ENCODE measurements at regions of chr6 and their contacts with region 1.

Region 1: DNA sequence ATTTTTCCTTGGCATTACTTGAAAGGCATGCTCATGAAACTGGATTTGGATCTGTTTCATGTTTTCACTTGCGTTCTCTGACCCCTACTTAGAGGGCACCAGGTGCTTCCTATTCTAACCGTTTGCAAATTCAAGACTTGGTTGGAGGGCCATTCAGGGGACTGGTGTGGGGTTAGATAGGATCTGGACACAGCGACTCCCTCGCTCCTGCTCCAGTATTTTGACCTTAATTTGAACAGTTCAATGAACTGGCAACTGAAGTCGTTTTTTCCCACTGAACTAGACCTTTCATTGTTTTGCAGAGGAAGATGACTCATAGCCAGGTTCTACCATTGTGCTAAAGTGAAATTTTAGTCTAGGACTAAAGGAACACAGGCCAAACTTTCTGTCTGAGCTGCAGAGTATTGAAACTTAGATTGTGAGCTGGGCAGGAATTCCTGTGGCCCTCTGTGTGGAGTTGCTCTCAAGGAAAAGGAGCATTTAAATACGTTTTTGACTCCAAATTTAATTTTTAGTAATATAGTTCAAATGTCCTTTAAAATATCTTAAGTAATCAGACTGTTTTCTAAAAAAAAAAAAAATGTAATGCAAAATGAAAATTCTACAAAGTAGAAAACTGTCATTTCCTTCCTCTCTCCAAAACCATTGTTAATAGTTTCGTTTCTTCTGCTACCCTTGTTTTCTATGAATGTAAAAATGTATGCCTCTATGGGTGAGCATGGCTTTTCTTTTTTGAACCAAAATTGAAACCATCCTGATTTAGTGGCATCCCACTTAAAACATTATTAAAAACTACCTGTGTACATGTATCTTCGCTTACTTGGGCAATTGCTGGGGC is 64.8 kb downstream of the UTRN start:
- DNase-seq: no peak
- H3K4me3 Mint-ChIP-seq: peak overlapping the region; percentile 83
- H3K27ac Mint-ChIP-seq: peak overlapping the region; percentile 94
- H3K4me1 Mint-ChIP-seq: peaks cover 89% of the 10 kb centered on the region
- H3K27me3 Mint-ChIP-seq: no peaks in the 10 kb centered on the region

Region 2: GRCh38 chr6:144248476-144249301 is 101.2 kb before region 1 on chr6:
- intact Hi-C with region 1: loop called (anchors 2 kb)
- DNase-seq: no peak
- H3K4me3 Mint-ChIP-seq: no peak overlapping the region
- H3K27ac Mint-ChIP-seq: peak overlapping the region; percentile 57
- H3K4me1 Mint-ChIP-seq: peaks cover 26% of the 10 kb centered on the region
- H3K27me3 Mint-ChIP-seq: peaks cover 7% of the 10 kb centered on the region

Region 3: GRCh38 chr6:144305985-144306384 is 43.9 kb before region 1 on chr6:
- intact Hi-C with region 1: loop called (anchors 1 kb)
- DNase-seq: peak; percentile 41
- H3K4me3 Mint-ChIP-seq: peak overlapping the region; percentile 58
- H3K27ac Mint-ChIP-seq: peak overlapping the region; percentile 85
- H3K4me1 Mint-ChIP-seq: peaks cover 51% of the 10 kb centered on the region
- H3K27me3 Mint-ChIP-seq: peaks cover 6% of the 10 kb centered on the region

Region 4: DNA sequence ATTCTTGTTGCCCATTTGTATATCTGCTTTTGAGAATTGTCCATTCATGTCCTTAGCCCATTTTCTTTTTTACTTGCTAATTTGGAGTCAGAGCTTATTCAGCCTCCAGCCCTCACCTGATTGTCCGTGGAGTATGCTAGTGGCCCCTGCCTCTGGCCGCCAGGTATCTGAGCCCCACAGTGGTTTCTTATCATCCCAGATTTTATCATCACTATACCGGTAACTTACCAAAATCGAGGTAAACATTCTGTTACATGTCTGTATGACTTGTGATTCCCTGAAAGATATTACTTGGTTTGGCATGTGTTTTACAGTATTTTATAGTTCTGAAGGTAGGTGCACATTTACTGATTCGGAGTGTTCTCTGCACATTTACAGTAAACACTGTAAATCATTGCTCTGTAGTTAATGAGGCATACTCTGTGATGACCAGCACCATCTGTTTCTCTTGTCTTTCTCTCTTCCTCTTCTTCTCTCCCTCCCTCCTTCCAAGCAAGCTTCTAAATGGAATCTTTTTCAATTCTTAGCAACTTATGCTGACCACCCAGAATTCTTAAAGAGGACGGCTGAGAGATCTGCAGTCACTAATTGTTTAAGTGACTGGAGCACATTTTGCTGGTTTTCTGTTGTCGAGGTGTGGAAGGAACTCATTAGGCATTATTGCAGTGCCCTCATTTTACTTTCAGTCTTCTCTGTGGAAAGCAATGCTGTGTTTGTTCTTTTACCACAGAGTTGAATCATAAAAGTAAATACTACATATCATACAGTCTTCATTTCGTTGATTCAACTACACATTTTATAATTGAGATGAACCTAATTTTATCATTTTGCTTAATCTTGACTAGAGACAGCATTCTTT is 61.7 kb after region 1 on chr6:
- intact Hi-C with region 1: loop called (anchors 5 kb)
- DNase-seq: no peak
- H3K4me3 Mint-ChIP-seq: peak overlapping the region; percentile 71
- H3K27ac Mint-ChIP-seq: peak overlapping the region; percentile 79
- H3K4me1 Mint-ChIP-seq: peaks cover 31% of the 10 kb centered on the region
- H3K27me3 Mint-ChIP-seq: no peaks in the 10 kb centered on the region

Region 5: GRCh38 chr6:144559865-144560593 is 210.1 kb after region 1 on chr6:
- intact Hi-C with region 1: loop called (anchors 5 kb)
- DNase-seq: peak; percentile 53
- H3K4me3 Mint-ChIP-seq: peak overlapping the region; percentile 61
- H3K27ac Mint-ChIP-seq: peak overlapping the region; percentile 86
- H3K4me1 Mint-ChIP-seq: peaks cover 31% of the 10 kb centered on the region
- H3K27me3 Mint-ChIP-seq: no peaks in the 10 kb centered on the region

Measured in activated T-helper 1 cell treated with anti-CD3 and anti-CD28 coated beads, Interleukin-12 subunit alpha, Interleukin-12 subunit beta, Interleukin-2, Interleukin-4 antibody, amounts not matched to agents 30 ng/mL and 10 ng/mL and 1 ng/mL, durations not matched to agents 14 hours and 24 hours and 36 hours (primary cell).